Naive thymus-derived CD4-positive, alpha-beta T cell (primary cell): ENCODE measurements at regions of chr3 and their contacts with region 1.

Region 1: GRCh38 chr3:48151058-48151806 is 37.0 kb downstream of the CDC25A start:
- DNase-seq: peak in 7 of 9 donors; percentile 17 to 61 (median 28)
- ATAC-seq: peak; percentile 80
- H3K4me3 ChIP-seq: no peak overlapping the region
- H3K4me3 Mint-ChIP-seq: no peak overlapping the region
- H3K27ac ChIP-seq: no peak overlapping the region
- H3K27ac Mint-ChIP-seq: no peak overlapping the region
- H3K4me1 ChIP-seq: no peaks in the 10 kb centered on the region
- H3K4me1 Mint-ChIP-seq: peaks cover 0 to 4% (median 0%) of the 10 kb centered on the region in 7 donors
- H3K27me3 ChIP-seq: no peaks in the 10 kb centered on the region
- H3K27me3 Mint-ChIP-seq: no peaks in the 10 kb centered on the region

Region 2: GRCh38 chr3:47440131-47440530 is 711.1 kb before region 1 on chr3:
- CTCF ChIA-PET with region 1: no interaction called
- POLR2A ChIA-PET with region 1: no interaction called
- intact Hi-C with region 1: no loop called
- DNase-seq: no peak
- ATAC-seq: no peak
- H3K4me3 ChIP-seq: no peak overlapping the region
- H3K4me3 Mint-ChIP-seq: no peak overlapping the region
- H3K27ac ChIP-seq: no peak overlapping the region
- H3K27ac Mint-ChIP-seq: peak overlapping the region in 1 of 9 donors; percentile 9
- H3K4me1 ChIP-seq: no peaks in the 10 kb centered on the region
- H3K4me1 Mint-ChIP-seq: peaks cover 2 to 18% (median 11%) of the 10 kb centered on the region in 7 donors
- H3K27me3 ChIP-seq: no peaks in the 10 kb centered on the region
- H3K27me3 Mint-ChIP-seq: no peaks in the 10 kb centered on the region

Region 3: GRCh38 chr3:47522082-47522987 is 628.9 kb before region 1 on chr3:
- CTCF ChIA-PET with region 1: interaction called, 10 read pairs
- POLR2A ChIA-PET with region 1: no interaction called
- intact Hi-C with region 1: loop called (anchors 10 kb)
- DNase-seq: peak; percentile 36 to 75 (median 60)
- ATAC-seq: peak; percentile 97
- H3K4me3 ChIP-seq: no peak overlapping the region
- H3K4me3 Mint-ChIP-seq: no peak overlapping the region
- H3K27ac ChIP-seq: no peak overlapping the region
- H3K27ac Mint-ChIP-seq: peak overlapping the region in 2 of 9 donors; percentile 15 to 67
- H3K4me1 ChIP-seq: no peaks in the 10 kb centered on the region
- H3K4me1 Mint-ChIP-seq: peaks cover 0 to 11% (median 0%) of the 10 kb centered on the region in 7 donors
- H3K27me3 ChIP-seq: no peaks in the 10 kb centered on the region
- H3K27me3 Mint-ChIP-seq: peaks cover 0 to 8% (median 0%) of the 10 kb centered on the region in 5 donors

Region 4: GRCh38 chr3:47824541-47825473 is 326.4 kb before region 1 on chr3:
- CTCF ChIA-PET with region 1: no interaction called
- POLR2A ChIA-PET with region 1: no interaction called
- intact Hi-C with region 1: loop called (anchors 1 to 2 kb)
- DNase-seq: peak; percentile 62 to 86 (median 79)
- ATAC-seq: peak; percentile 100
- H3K4me3 ChIP-seq: peak overlapping the region; percentile 79
- H3K4me3 Mint-ChIP-seq: peak overlapping the region; percentile 81 to 94 (median 90)
- H3K27ac ChIP-seq: peak overlapping the region; percentile 88
- H3K27ac Mint-ChIP-seq: peak overlapping the region; percentile 66 to 96 (median 89)
- H3K4me1 ChIP-seq: peaks cover 15% of the 10 kb centered on the region in 2 donors
- H3K4me1 Mint-ChIP-seq: peaks cover 15 to 46% (median 36%) of the 10 kb centered on the region in 7 donors
- H3K27me3 ChIP-seq: no peaks in the 10 kb centered on the region
- H3K27me3 Mint-ChIP-seq: no peaks in the 10 kb centered on the region

Region 5: GRCh38 chr3:47836986-47837385 is 314.2 kb before region 1 on chr3:
- CTCF ChIA-PET with region 1: no interaction called
- POLR2A ChIA-PET with region 1: no interaction called
- intact Hi-C with region 1: loop called in 1 of 2 experiments (anchors 2 kb)
- DNase-seq: no peak
- ATAC-seq: no peak
- H3K4me3 ChIP-seq: no peak overlapping the region
- H3K4me3 Mint-ChIP-seq: no peak overlapping the region
- H3K27ac ChIP-seq: no peak overlapping the region
- H3K27ac Mint-ChIP-seq: peak overlapping the region in 6 of 9 donors; percentile 35 to 56 (median 50)
- H3K4me1 ChIP-seq: no peaks in the 10 kb centered on the region
- H3K4me1 Mint-ChIP-seq: peaks cover 0 to 12% (median 7%) of the 10 kb centered on the region in 7 donors
- H3K27me3 ChIP-seq: no peaks in the 10 kb centered on the region
- H3K27me3 Mint-ChIP-seq: no peaks in the 10 kb centered on the region